ENCODE measurements at regions of chr11 and their contacts with region 1.

Region 1: GRCh38 chr11:18105802-18106574 is at the start of gene SAAL1:
- DNase-seq: peak; percentile 90
- H3K4me3 ChIP-seq: peak within 1 kb of the TSS; percentile 59 to 89 (median 76)
- H3K27ac ChIP-seq: peak within 1 kb of the TSS; percentile 53 to 69 (median 64)
- H3K4me1 ChIP-seq: peaks cover 3 to 11% (median 9%) of the 10 kb centered on the region in 4 donors
- H3K27me3 ChIP-seq: peaks cover 7% of the 10 kb centered on the region
- CTCF ChIP-seq: peak; percentile 51 to 75 (median 67)
- EP300 ChIP-seq: no peak
- POLR2A ChIP-seq: peak; percentile 39
- total RNA-seq, gene SAAL1: 11.5 to 23.0 (median 12.7) TPM

Region 2: DNA sequence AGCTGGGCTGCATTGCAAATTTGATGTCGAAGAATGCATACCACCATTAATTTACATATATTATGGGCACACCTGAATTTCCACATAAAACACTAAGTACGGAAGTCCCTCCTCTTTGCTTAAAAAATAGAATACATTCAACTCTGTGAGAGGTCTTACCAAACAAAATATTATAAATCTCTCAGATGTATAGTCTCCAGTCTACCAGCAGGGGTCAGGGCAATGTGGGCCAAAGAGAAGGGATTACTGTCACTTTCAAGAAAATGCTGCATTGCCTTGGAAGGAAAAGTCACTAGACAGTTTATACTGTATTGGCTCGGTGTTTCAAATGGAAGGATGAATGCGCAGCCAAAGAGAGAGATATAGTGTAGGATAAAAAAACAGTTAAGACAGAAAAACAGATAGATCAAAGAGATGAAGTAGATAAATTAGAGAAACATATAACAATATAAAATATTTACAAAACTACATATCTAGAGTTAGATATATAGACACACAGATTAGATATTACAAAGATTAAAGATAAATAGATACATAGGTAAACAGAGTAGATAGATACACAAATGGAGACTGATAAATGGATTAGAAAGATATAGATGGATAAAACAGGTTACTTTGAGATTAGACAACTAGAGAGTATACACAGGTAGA is 114.1 kb before region 1 on chr11:
- in situ Hi-C with region 1: loop called in 2 of 4 experiments (anchors 10 kb)
- intact Hi-C with region 1: no loop called
- DNase-seq: peak; percentile 30
- H3K4me3 ChIP-seq: no peak overlapping the region
- H3K27ac ChIP-seq: no peak overlapping the region
- H3K4me1 ChIP-seq: no peaks in the 10 kb centered on the region
- H3K27me3 ChIP-seq: no peaks in the 10 kb centered on the region
- CTCF ChIP-seq: peak; percentile 75 to 79 (median 78)
- EP300 ChIP-seq: no peak
- POLR2A ChIP-seq: no peak

Region 3: GRCh38 chr11:18000760-18001159 is 105.2 kb before region 1 on chr11:
- in situ Hi-C with region 1: loop called in 3 of 4 experiments (anchors 10 kb)
- intact Hi-C with region 1: no loop called
- DNase-seq: no peak
- H3K4me3 ChIP-seq: no peak overlapping the region
- H3K27ac ChIP-seq: no peak overlapping the region
- H3K4me1 ChIP-seq: no peaks in the 10 kb centered on the region
- H3K27me3 ChIP-seq: no peaks in the 10 kb centered on the region
- CTCF ChIP-seq: no peak
- EP300 ChIP-seq: no peak
- POLR2A ChIP-seq: no peak

Region 4: DNA sequence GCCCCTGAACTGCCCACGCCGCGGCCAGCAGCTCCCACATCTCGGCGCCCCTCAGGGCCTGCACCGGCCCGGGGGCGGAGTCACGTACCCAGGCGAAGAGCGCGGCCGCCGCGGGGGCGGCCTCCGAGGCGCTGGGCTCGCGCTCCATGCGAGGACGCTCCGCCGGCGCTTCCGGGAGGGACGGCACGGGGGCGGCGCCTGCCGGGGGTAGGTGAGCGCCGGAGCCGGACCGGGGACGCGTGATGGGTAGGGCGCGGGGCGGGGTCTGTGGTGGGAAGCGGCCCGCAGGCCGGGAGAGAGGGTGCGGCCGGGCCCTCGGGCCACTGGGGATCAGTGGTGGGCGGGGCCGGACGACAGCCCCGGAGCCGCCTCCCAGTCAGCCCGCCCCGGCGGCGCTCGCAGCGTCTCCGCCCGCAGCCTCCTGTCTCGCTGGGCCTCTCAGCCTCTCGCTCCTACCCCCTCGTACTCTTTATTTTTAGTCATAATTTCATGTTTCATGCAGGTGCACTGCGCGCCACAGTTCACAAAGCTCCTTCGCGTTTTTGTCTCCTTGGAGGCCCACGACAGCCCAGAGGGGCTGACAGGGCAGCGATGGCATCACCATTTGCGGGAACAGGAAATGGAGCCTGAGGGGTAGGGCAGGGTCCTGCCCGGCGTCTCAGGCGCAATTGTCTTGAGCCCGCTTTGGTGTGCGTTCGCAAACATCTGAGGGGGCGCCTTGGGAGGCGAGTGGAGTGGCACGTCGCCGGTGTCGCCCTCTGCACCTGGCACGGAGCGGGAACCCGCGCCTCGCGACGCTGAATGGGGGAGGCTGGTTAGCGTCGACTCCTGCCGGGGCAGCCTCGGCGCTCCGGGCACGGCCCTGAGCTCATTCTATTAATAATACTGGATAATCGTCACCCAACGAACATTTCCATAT is 92.9 kb before region 1 on chr11 and contains the start of gene SERGEF:
- in situ Hi-C with region 1: loop called in 1 of 4 experiments (anchors 10 kb)
- intact Hi-C with region 1: loop called (anchors 10 kb)
- DNase-seq: peak; percentile 98
- H3K4me3 ChIP-seq: peak within 1 kb of the TSS; percentile 67 to 98 (median 72)
- H3K27ac ChIP-seq: peak within 1 kb of the TSS; percentile 86 to 97 (median 88)
- H3K4me1 ChIP-seq: peaks cover 2 to 17% (median 10%) of the 10 kb centered on the region in 4 donors
- H3K27me3 ChIP-seq: no peaks in the 10 kb centered on the region
- CTCF ChIP-seq: peak in 1 of 5 experiments; percentile 6
- EP300 ChIP-seq: no peak
- POLR2A ChIP-seq: peak; percentile 97
- total RNA-seq, gene SERGEF: 11.6 to 28.9 (median 19.1) TPM

Region 5: DNA sequence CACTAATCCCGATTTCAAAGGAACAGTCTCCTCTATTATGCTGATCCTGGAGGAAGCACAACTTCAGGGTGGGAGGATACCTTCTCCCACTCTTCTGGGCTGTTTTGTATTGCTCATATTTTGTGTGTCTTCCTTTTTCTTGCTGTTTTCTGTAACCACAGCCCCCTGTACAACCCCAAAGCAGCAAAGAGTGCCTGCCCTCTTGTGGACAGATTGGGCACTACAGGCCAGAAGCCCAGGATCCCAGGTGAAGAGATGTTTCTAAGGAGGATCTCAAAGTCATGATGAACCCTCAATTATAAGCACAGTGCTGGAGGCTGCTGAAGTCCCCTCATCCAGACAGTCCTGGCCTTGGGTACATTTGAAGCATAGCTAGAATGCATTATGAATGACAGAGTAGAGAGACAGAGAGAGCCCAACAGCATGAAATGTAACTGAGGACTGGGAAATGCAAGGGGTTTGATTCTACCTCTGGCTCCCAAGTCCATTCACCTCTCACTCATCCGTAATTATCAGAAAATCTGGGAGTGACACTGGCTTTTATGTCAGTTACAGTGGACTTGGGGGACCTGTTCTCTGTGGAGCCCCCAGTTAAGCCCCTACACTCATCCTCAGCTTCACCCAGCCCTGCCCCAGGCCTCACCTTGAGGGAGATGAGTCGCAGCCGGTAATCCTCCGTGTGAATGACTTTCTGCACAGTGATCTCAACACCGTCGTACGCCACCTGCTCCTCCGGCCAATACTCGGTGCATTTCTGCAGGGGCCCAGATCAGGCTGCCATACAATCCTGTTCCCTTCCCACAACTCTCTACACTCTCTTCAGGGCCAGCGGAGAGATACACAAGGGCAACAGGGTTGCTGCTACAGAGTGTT is 626.2 kb after region 1 on chr11:
- in situ Hi-C with region 1: loop called in 2 of 4 experiments (anchors 25 kb)
- intact Hi-C with region 1: no loop called
- DNase-seq: peak; percentile 59
- H3K4me3 ChIP-seq: no peak overlapping the region
- H3K27ac ChIP-seq: no peak overlapping the region
- H3K4me1 ChIP-seq: no peaks in the 10 kb centered on the region
- H3K27me3 ChIP-seq: no peaks in the 10 kb centered on the region
- CTCF ChIP-seq: peak; percentile 78 to 96 (median 95)
- EP300 ChIP-seq: no peak
- POLR2A ChIP-seq: no peak

Region 6: DNA sequence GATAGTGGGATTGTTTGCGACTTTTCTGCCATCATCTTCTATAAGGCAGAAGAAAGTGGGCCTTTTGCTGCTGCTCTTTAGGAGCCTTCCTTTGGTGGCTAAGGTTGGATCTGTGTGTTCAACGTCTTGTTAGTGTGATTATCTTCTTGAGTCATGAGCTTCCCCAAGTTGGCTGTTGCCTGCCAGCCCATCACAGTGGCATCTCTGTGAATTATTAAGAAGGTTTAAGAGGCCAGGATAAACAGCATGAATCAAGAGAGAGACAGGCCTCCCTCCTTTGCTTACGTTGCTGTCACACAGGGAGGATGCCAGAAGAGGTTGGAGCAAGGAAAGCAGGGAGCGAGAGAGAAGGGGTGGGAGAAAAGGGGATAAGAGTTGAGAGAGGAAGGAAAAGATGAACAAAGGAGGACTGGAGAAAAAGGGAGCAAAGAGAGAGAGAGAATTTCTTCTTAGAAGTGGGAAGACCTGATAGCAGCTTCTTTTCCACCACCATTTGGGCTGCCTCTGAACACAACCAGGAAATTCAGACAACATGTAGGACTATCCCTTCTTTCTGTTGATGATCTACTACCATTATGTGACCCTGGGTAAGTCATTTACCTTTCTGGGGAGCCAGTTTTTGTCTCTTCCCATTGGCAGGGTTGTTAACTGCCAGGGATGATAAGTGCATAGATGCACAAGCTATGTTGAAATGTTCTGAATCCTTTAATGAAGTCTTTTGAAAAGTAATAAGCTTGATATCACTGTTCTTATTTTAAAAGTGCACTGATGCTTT is 1733.2 kb after region 1 on chr11:
- in situ Hi-C with region 1: no loop called
- intact Hi-C with region 1: no loop called
- DNase-seq: no peak
- H3K4me3 ChIP-seq: no peak overlapping the region
- H3K27ac ChIP-seq: no peak overlapping the region
- H3K4me1 ChIP-seq: no peaks in the 10 kb centered on the region
- H3K27me3 ChIP-seq: no peaks in the 10 kb centered on the region
- CTCF ChIP-seq: no peak
- EP300 ChIP-seq: no peak
- POLR2A ChIP-seq: no peak